Head of caudate nucleus (tissue), 42 donors: ENCODE measurements at regions of chr9 and their contacts with region 1.

Region 1: DNA sequence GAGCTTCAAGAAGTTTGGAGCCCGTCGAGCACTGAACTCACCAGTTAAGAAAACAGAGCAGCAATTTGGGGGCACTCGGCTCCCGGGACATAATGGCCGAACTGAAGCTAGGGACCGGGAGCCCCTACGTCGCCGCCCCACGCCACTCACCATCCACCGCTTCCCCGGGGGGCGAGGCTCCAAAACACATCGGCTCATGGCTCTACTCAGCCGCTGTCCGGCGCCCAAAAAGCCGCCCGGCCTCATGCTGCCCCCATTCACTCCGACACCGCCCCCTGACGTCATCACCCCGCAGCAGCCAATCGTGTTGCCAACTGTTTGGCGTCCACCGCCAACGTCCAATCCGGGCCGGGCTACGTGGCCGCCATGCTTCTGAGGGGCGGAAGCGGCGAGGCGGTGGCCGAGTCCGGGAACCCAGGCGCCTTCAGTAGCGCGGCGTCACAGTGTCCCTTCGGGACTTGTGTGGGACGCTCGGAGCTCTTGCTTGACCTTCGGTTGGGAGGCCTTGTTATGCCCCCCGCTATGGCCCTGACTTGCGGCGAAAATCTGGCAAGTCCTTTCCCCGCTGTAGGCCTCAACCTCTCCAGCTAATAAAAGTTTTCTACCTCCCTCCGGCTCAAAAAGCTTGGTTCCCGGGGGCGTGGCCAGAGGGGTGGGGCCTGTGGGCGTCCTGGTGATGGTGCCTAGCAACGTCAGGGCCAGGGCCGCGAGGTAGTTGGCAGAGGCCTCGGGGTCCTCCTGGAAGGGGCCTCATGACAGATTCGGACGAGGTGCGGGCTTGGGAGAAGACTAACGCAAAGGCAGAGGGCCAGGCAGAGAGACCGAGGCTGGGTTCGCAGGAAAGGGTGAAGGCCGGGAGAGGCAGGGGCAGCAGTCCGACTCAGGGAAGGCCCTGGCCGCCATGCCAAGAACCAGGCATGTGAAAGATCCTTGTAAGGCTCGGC is at the starts of genes PTRH1 and TTC16:
- DNase-seq: peak; percentile 94 to 100 (median 99)

Region 2: GRCh38 chr9:127611899-127612790 is 103.5 kb before region 1 on chr9 and contains the start of gene STXBP1:
- intact Hi-C with region 1: loop called (anchors 5 kb)
- DNase-seq: peak; percentile 69 to 96 (median 92)

Region 3: GRCh38 chr9:127676636-127677035 is 39.0 kb before region 1 on chr9:
- intact Hi-C with region 1: no loop called
- DNase-seq: peak in 30 of 42 donors; percentile 22 to 83 (median 48)

Region 4: GRCh38 chr9:127770905-127771569 is 55.4 kb after region 1 on chr9:
- intact Hi-C with region 1: no loop called
- DNase-seq: peak in 41 of 42 donors; percentile 80 to 97 (median 93)